K562 (cell line): ENCODE measurements at regions of chr10 and their contacts with region 1.

Region 1: GRCh38 chr10:14185316-14186045 is 145.2 kb downstream of the FRMD4A start:
- DNase-seq: peak; percentile 33 to 85 (median 61)
- ATAC-seq: peak; percentile 95
- H3K4me3 ChIP-seq: no peak overlapping the region
- H3K27ac ChIP-seq: peak overlapping the region; percentile 84
- H3K4me1 ChIP-seq: peaks cover 5 to 38% of the 10 kb centered on the region in 2 experiments
- H3K27me3 ChIP-seq: peaks cover 2 to 16% of the 10 kb centered on the region in 2 experiments; a peak in 1 of 5 replicates
- CTCF ChIP-seq: peak in 2 of 3 experiments; percentile 0 to 4; a peak in 2 of 6 replicates
- EP300 ChIP-seq: peak; percentile 60; the same call in 1 of the 2 replicates
- POLR2A ChIP-seq: peak; percentile 100
- RAD21 ChIP-seq: no peak

Region 2: DNA sequence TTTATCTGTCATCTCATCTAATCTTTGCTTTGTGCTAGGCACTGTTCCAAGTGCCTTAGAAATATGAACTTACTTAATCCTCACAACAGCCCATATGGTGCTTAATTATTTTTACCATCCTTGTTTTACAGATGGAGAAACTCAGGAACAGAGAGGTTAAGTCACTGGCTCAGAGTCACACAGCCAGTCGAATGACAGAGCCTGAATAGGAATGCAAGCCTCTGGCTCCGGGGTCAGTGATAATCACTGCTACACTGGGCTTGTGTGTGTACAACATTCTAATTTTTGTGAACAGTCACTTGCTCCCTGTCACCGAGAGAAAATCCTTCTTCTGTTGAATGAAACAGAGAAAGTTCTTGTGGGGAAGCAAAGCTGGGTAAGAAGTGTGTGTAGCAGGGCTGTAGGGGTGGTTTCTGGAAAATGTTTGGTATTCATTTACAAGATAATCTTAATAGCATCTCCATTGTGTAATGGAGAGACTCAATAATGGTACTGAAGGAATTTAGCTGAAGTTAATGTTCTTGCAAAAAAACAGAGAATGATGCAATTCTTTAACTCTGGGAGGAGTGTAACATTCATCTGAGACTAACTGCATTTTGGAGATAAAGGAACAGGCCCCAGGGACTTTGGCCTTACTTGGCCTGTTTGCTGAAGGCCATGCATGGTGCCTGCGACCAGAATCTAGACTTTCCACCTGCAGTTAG is 145.4 kb before region 1 on chr10:
- CTCF ChIA-PET with region 1: no interaction called
- POLR2A ChIA-PET with region 1: interaction called, 3 read pairs
- in situ Hi-C with region 1: no loop called
- intact Hi-C with region 1: loop called (anchors 10 kb)
- DNase-seq: no peak
- ATAC-seq: peak; percentile 73
- H3K4me3 ChIP-seq: no peak overlapping the region
- H3K27ac ChIP-seq: no peak overlapping the region
- H3K4me1 ChIP-seq: no peaks in the 10 kb centered on the region
- H3K27me3 ChIP-seq: peaks cover 6 to 10% of the 10 kb centered on the region in 2 experiments; a peak in 4 of 5 replicates
- CTCF ChIP-seq: no peak
- EP300 ChIP-seq: no peak
- POLR2A ChIP-seq: no peak
- RAD21 ChIP-seq: no peak

Region 3: GRCh38 chr10:14200698-14201544 is 15.4 kb after region 1 on chr10:
- CTCF ChIA-PET with region 1: no interaction called
- POLR2A ChIA-PET with region 1: interaction called, 31 read pairs
- in situ Hi-C with region 1: no loop called
- intact Hi-C with region 1: no loop called
- DNase-seq: peak; percentile 24 to 36 (median 32)
- ATAC-seq: peak; percentile 67; the same call in 2 of the 3 replicates
- H3K4me3 ChIP-seq: no peak overlapping the region
- H3K27ac ChIP-seq: no peak overlapping the region
- H3K4me1 ChIP-seq: no peaks in the 10 kb centered on the region
- H3K27me3 ChIP-seq: peaks cover 3 to 28% of the 10 kb centered on the region in 2 experiments; a peak in 4 of 5 replicates
- CTCF ChIP-seq: peak in 2 of 3 experiments; percentile 29 to 57; a peak in 5 of 6 replicates
- EP300 ChIP-seq: no peak
- POLR2A ChIP-seq: no peak
- RAD21 ChIP-seq: no peak

Region 4: GRCh38 chr10:14285941-14286560 is 100.6 kb after region 1 on chr10:
- CTCF ChIA-PET with region 1: no interaction called
- POLR2A ChIA-PET with region 1: no interaction called
- in situ Hi-C with region 1: no loop called
- intact Hi-C with region 1: no loop called
- DNase-seq: no peak
- ATAC-seq: no peak
- H3K4me3 ChIP-seq: no peak overlapping the region
- H3K27ac ChIP-seq: no peak overlapping the region
- H3K4me1 ChIP-seq: no peaks in the 10 kb centered on the region
- H3K27me3 ChIP-seq: no peaks in the 10 kb centered on the region
- CTCF ChIP-seq: no peak
- EP300 ChIP-seq: no peak
- POLR2A ChIP-seq: no peak
- RAD21 ChIP-seq: no peak

Region 5: GRCh38 chr10:14478604-14479003 is 293.1 kb after region 1 on chr10:
- CTCF ChIA-PET with region 1: no interaction called
- POLR2A ChIA-PET with region 1: interaction called, 3 read pairs
- in situ Hi-C with region 1: loop called (anchors 10 kb)
- intact Hi-C with region 1: no loop called
- DNase-seq: peak; percentile 15 to 31 (median 23)
- ATAC-seq: peak; percentile 73
- H3K4me3 ChIP-seq: no peak overlapping the region
- H3K27ac ChIP-seq: no peak overlapping the region
- H3K4me1 ChIP-seq: no peaks in the 10 kb centered on the region
- H3K27me3 ChIP-seq: peaks cover 8 to 43% of the 10 kb centered on the region in 2 experiments; a peak in 4 of 5 replicates
- CTCF ChIP-seq: peak; percentile 41 to 68 (median 59); a peak in 4 of 6 replicates
- EP300 ChIP-seq: no peak
- POLR2A ChIP-seq: no peak
- RAD21 ChIP-seq: peak; percentile 51 to 68